Lower leg skin (tissue), 4 donors: ENCODE measurements at regions of chr17 and their contacts with region 1.

Region 1: DNA sequence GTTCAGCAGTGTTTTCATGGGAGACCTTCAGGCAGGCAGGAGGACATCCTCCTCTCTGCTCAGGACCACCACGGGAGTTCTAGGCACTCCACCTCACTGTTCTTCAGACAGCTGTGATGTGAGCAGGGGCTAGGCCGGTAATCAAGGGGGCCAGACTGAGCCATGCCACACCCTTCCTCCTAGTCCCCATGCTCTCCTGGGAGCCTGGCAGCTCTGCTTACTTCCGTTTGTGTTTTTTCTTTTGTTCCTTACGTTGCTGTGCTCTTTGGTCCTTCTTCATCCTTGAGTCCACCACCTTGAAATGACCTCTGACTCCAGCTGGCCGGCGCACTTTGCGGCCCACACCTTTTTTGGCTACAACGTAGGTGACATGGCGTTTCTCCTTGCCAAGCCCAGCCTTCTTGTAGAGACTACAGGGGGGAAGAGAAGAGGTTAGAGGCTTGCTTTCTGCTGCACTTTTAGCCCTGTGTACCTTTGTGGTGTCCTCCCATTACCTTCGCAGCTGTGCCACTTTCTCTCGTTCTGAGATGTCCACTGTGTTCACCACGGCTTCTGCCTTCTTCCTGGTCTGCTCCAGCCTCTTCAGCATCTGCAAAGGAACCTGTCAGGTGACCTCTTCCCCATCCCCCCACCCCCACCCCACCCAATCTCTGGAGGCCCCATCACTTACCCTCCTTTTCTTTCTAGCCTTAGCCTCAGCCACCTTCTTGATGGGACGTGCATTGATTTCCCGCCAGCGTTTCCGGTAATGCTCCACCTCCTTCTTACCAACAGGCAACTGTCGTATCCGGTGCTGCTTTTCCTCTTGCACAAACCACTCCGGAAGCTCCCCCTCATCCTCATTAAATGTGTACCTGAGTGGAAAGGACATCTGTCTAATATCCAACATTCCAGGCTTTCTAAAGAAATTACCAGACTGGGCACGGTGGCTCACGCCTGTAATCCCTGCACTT is 7.4 kb upstream of the PSMC5 start:
- DNase-seq: no peak
- H3K4me3 ChIP-seq: no peak overlapping the region
- CTCF ChIP-seq: no peak
- POLR2A ChIP-seq: no peak

Region 2: DNA sequence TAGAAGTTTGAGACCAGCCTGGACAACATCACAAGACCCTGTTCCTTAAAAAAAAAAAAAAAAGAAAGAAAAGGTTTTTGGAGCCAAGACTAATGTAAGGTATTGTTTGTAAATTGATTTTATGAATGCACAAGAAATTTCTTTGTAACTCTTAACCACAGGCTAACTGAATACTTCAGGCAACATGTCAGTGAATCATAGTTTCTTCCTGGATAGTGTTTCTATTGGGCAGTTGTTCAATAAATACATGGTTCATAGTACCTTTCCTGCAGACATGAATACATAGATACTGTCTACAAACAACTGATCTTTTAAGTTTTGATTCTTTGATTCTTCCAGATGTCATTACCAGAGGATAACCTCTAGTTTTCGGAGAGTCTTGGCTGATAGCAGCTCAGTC is 34.3 kb before region 1 on chr17:
- intact Hi-C with region 1: loop called (anchors 5 kb)
- DNase-seq: no peak
- H3K4me3 ChIP-seq: no peak overlapping the region
- CTCF ChIP-seq: no peak
- POLR2A ChIP-seq: no peak

Region 3: DNA sequence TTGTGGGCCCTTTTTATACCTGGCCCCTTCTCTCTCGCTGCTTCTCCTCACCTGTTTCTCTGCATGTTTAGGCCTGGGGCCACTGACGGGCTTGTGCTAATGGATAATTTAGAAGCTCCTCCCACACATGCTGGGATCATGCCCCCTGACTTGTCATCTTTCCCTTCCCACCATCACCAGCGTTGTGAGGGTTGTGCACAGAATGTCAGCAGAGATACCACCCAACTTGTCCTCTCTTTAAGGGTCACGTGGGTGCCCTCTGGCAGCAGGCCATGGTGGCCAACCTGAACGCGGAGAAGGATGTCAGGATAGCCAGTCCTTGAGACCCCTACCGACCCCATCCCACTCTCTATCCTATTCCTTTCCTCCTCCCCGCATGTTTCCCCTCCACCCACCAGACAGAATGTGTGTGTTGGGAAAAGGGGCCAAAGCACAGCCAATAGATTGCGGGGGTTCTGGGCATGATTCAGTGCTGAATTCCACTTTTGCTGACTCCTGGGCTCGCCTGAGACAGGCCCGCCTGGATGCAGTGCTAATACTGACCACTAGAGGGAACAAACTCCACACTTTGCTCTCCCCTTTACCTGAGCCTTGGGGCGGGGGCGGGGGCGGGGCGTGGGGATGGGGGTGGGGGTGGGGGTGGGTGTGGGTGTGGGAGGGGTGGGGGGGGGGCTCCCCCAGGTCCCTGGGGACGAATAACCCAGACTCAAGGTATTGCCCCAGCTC is 62.2 kb after region 1 on chr17 and contains the start of gene GH2:
- intact Hi-C with region 1: no loop called
- DNase-seq: peak in 1 of 2 donors; percentile 18
- H3K4me3 ChIP-seq: no peak within 1 kb of the TSS
- CTCF ChIP-seq: no peak
- POLR2A ChIP-seq: no peak
- total RNA-seq, gene GH2: not detected

Region 4: GRCh38 chr17:64281962-64282727 is 462.3 kb after region 1 on chr17:
- intact Hi-C with region 1: no loop called
- DNase-seq: peak in 1 of 2 donors; percentile 31
- H3K4me3 ChIP-seq: no peak overlapping the region
- CTCF ChIP-seq: peak in 1 of 3 donors; percentile 56
- POLR2A ChIP-seq: no peak